ENCODE measurements at regions of chr7 and their contacts with region 1.

Region 1: DNA sequence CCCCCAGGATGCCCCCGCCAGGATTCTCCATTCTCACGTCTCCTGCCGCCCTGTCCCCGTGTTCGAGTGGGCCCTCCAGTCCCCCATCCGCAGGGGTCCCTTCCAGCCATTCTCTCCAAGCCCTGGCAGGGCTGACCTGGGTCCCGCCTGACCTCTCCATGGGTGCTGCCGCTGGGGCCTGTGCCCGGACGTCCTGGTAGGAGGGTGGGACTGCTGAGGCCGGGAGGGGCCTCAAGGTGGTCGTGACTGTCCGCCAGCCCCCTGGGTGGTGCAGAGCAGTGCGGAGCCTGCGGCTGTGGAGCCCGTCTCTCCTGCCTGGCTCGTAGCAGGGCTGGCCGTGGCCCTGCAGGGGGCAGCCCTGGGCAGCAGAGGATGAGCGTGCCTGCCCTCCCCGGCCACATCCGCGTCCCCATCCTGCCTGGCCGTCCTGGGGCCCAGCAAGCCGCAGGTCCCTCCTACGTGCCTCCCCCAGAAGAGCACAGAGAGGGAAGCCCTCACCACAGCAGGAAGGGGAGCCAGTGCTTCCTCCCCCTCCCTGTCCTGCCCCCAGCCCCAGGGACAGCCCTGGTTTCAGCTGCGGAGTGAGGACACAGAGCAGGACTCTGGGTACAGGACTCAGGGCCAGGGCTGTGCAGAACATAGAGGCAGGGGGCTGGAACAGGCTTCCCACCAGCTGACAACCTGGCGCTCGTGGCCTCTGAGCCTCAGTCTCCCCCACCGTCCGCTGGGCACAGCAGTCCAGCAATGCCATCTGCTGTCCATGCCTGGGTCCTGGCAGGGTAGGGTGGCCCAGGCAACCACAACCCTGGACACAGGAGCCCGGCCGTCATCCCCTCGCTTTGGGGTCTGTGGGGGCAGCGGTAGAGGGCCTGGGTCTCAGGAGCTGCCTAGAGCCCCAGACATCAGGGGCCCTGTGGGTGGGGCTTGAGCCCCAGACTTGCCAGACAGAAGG is 1.5 kb upstream of the GRIFIN start:
- DNase-seq: peak; percentile 19 to 82 (median 58)
- ATAC-seq: peak; percentile 94
- H3K4me3 ChIP-seq: no peak overlapping the region
- H3K4me3 Mint-ChIP-seq: no peak overlapping the region
- H3K27ac ChIP-seq: no peak overlapping the region
- H3K27ac Mint-ChIP-seq: no peak overlapping the region
- H3K4me1 ChIP-seq: peaks cover 19% of the 10 kb centered on the region
- H3K4me1 Mint-ChIP-seq: no peaks in the 10 kb centered on the region
- H3K27me3 ChIP-seq: no peaks in the 10 kb centered on the region
- H3K27me3 Mint-ChIP-seq: no peaks in the 10 kb centered on the region
- CTCF ChIP-seq: peak; percentile 77

Region 2: GRCh38 chr7:2354186-2354938 is 123.4 kb before region 1 on chr7 and contains the start of gene EIF3B:
- CTCF ChIA-PET with region 1: no interaction called
- POLR2A ChIA-PET with region 1: no interaction called
- intact Hi-C with region 1: no loop called
- DNase-seq: peak; percentile 81 to 96 (median 88)
- ATAC-seq: peak; percentile 86
- H3K4me3 ChIP-seq: peak within 1 kb of the TSS; percentile 85
- H3K4me3 Mint-ChIP-seq: peak within 1 kb of the TSS; percentile 92
- H3K27ac ChIP-seq: peak within 1 kb of the TSS; percentile 99 to 100
- H3K27ac Mint-ChIP-seq: peak within 1 kb of the TSS; percentile 100
- H3K4me1 ChIP-seq: peaks cover 53% of the 10 kb centered on the region
- H3K4me1 Mint-ChIP-seq: peaks cover 37% of the 10 kb centered on the region
- H3K27me3 ChIP-seq: no peaks in the 10 kb centered on the region
- H3K27me3 Mint-ChIP-seq: no peaks in the 10 kb centered on the region
- CTCF ChIP-seq: no peak
- total RNA-seq, gene EIF3B: 166 to 167 TPM

Region 3: DNA sequence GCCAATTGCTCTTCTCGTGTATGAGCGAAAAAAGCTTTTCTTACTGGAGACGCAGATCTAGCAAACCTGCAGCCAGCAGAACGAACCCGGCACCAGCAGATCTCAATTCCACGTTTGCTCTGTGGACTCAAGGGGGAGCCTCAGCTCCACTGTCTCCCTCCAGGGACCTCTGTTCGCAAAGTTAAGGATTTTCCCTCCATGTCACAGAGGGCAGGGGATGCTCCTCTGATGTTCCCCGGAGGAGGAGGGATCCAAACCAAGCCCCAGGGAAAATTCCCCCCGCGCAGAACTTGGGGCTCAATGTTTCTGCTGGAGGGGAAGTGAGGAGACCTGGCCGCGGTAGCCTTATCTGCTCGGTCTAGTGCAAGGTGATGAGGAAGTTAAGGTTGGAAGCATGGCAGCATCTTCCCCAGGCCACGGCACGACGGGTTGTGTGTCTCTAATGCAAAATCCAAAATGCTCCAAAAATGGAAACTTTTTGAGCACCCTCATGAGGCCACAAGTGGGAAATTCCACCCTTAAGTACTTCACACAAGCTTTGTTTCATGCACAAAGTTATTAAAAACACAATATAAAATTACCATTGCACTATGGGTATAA is 90.1 kb after region 1 on chr7:
- CTCF ChIA-PET with region 1: no interaction called
- POLR2A ChIA-PET with region 1: no interaction called
- intact Hi-C with region 1: loop called in 1 of 2 experiments (anchors 1 kb)
- DNase-seq: peak in 1 of 14 experiments; percentile 38
- ATAC-seq: no peak
- H3K4me3 ChIP-seq: no peak overlapping the region
- H3K4me3 Mint-ChIP-seq: no peak overlapping the region
- H3K27ac ChIP-seq: no peak overlapping the region
- H3K27ac Mint-ChIP-seq: no peak overlapping the region
- H3K4me1 ChIP-seq: peaks cover 13% of the 10 kb centered on the region
- H3K4me1 Mint-ChIP-seq: peaks cover 22% of the 10 kb centered on the region
- H3K27me3 ChIP-seq: no peaks in the 10 kb centered on the region
- H3K27me3 Mint-ChIP-seq: no peaks in the 10 kb centered on the region
- CTCF ChIP-seq: no peak

Region 4: DNA sequence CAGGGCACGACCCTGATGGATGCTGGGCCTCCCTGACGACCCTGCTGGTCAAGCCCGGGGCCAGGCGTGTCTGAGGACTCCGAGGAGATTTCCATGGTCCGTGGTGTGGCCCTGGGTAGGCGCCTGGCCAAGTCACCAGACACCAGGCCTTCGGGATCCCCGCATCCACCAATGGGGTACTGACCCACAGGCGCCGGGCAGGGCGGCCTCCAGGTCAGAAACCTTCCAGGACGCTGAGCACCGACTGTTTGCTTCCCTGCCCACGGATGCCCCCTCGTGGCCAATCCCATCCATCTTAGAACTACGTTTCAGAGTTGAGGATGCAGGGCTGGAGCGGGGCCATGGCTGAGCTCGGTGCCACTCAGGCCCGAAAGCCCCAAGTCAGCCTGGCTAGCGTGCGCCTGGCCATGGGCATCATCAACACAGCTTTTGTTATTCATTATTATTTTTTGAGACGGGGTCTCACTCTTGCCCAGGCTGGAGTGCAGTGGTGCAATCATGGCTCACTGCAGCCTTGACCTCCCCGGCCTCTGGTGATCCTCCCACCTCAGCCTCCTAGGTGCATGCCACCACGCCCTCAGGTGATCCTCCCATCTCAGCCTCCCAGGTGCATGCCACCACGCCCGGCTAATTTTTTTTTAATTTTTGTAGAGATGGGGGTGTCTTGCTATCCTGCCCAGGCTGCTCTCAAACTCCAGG is 203.2 kb after region 1 on chr7:
- CTCF ChIA-PET with region 1: no interaction called
- POLR2A ChIA-PET with region 1: no interaction called
- intact Hi-C with region 1: loop called in 1 of 2 experiments (anchors 1 kb)
- DNase-seq: peak in 13 of 14 experiments; percentile 14 to 74 (median 48)
- ATAC-seq: no peak
- H3K4me3 ChIP-seq: no peak overlapping the region
- H3K4me3 Mint-ChIP-seq: no peak overlapping the region
- H3K27ac ChIP-seq: no peak overlapping the region
- H3K27ac Mint-ChIP-seq: no peak overlapping the region
- H3K4me1 ChIP-seq: peaks cover 4% of the 10 kb centered on the region
- H3K4me1 Mint-ChIP-seq: no peaks in the 10 kb centered on the region
- H3K27me3 ChIP-seq: no peaks in the 10 kb centered on the region
- H3K27me3 Mint-ChIP-seq: peaks cover 6% of the 10 kb centered on the region
- CTCF ChIP-seq: peak; percentile 57

Region 5: DNA sequence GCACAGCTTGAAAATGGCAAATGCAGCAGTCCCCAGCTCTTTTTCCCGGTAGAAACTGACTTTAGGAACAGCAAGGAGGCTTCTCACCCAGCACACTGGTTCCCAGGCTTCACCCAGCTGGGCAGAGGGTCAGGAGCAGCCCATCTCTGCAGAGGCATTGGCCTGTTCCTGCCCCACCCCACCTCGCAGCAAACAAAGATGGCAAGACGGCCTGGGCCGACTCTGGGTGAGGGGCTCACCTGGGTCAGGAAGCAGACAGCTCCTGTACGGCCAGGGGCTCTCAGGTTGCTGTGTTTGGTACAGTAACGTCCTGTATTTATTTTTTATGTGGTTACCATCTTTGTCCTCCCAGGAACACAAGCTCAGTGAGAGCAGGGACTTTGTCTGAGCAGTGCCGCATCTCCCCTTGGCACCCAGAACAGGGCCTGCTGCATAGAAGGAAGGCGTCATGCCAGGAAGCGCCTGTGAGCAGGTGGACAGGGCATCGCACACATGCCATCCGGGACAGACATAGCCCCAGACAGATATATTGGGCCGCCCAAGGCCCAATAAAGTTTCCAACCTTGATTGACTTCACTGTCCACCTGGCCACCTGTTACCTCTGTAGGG is 1619.4 kb after region 1 on chr7:
- CTCF ChIA-PET with region 1: no interaction called
- POLR2A ChIA-PET with region 1: no interaction called
- intact Hi-C with region 1: no loop called
- DNase-seq: peak in 4 of 14 experiments; percentile 2 to 37 (median 18)
- ATAC-seq: peak; percentile 79
- H3K4me3 ChIP-seq: no peak overlapping the region
- H3K4me3 Mint-ChIP-seq: peak overlapping the region; percentile 74
- H3K27ac ChIP-seq: no peak overlapping the region
- H3K27ac Mint-ChIP-seq: peak overlapping the region; percentile 82
- H3K4me1 ChIP-seq: no peaks in the 10 kb centered on the region
- H3K4me1 Mint-ChIP-seq: peaks cover 58% of the 10 kb centered on the region
- H3K27me3 ChIP-seq: no peaks in the 10 kb centered on the region
- H3K27me3 Mint-ChIP-seq: no peaks in the 10 kb centered on the region
- CTCF ChIP-seq: no peak